ENCODE measurements at regions of chr5 and their contacts with region 1.

Region 1: GRCh38 chr5:87780831-87781760 is 368.4 kb upstream of the CCNH start:
- DNase-seq: peak; percentile 76 to 98 (median 90)

Region 2: GRCh38 chr5:87627363-87627762 is 153.7 kb before region 1 on chr5:
- intact Hi-C with region 1: no loop called
- DNase-seq: no peak

Region 3: GRCh38 chr5:87850503-87851271 is 69.6 kb after region 1 on chr5:
- intact Hi-C with region 1: no loop called
- DNase-seq: no peak

Region 4: GRCh38 chr5:87899721-87900131 is 118.6 kb after region 1 on chr5:
- intact Hi-C with region 1: loop called (anchors 5 kb)
- DNase-seq: peak in 8 of 10 donors; percentile 23 to 91 (median 58)

Region 5: GRCh38 chr5:88021141-88021540 is 240.0 kb after region 1 on chr5:
- intact Hi-C with region 1: no loop called
- DNase-seq: no peak

Region 6: DNA sequence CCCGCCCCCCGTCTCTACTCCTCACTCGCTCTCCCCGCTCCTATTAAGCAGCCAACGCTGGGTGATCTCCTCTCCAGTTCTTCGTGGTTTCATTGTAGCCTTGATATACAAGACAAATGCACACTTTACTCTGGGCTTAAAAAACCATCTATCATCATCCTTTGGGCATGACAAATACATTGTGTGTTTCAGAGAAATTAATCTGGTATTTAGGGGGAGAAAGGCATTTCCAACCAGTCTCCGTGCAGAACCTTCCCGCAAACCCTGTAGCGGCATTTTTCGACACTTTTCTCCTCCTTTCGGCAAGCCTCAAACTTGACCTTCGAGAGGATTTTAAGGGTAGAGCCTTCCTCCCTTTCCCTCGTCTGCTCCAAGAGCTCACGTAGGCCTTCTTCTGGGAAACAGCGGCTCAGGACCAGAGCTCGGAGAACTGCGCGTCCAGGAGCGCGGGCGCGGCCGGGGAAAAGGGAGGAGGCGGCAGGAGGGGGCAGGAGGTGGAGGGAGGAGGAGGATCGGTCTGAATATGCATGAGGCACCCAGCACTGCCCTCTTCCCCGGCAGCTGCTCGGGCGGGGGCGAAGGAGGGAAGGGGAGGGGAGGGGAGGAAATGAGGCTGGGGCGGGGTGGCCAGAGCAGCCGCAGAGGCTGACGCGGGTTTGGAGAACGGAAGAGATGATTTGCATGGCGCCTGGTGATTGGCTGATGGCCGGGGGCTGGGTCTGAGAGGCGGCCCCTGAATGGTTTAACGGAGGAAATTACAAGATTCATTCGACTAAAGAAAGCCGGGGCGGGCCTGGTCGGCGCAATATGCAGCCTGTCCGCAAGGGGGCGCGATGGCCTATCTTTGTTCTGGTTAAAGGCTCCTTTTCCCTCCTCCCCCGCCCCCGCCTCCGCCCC is 360.0 kb after region 1 on chr5:
- intact Hi-C with region 1: loop called (anchors 2 kb)
- DNase-seq: peak; percentile 99 to 100 (median 99)

Region 7: DNA sequence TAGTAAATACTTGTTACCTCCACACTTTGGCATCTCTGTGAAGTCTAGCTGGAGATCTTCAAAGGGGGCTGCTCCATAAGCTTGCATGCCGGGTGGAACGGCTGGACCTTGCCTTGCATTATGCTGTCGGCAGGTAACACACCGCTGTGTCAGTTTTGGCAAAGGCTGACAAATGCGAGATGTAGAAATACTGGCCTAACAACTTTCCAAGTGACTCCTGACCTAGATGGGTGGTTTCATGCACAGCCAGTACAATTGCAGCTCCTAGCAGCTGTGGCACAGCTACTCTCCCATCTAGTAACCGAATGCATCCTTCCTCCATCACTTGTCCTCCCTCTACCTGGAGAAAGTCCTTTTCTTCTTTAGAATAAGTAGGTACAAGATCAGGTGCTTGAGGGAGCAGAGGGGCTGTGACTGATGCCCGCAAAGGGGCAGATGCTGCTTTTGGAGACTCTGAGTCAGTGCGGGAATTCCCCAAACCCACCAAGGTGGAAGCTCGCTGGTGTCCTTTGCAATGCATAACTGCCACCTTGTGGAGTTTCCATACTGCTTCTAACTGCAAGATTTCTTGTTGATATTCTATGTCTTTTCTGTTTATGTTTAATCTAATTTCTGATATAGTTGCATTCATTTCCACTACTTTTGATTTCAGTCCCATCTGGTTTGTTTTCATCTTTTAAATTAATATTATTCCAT is 409.2 kb after region 1 on chr5:
- intact Hi-C with region 1: loop called (anchors 5 kb)
- DNase-seq: peak in 6 of 10 donors; percentile 21 to 86 (median 40)

Region 8: DNA sequence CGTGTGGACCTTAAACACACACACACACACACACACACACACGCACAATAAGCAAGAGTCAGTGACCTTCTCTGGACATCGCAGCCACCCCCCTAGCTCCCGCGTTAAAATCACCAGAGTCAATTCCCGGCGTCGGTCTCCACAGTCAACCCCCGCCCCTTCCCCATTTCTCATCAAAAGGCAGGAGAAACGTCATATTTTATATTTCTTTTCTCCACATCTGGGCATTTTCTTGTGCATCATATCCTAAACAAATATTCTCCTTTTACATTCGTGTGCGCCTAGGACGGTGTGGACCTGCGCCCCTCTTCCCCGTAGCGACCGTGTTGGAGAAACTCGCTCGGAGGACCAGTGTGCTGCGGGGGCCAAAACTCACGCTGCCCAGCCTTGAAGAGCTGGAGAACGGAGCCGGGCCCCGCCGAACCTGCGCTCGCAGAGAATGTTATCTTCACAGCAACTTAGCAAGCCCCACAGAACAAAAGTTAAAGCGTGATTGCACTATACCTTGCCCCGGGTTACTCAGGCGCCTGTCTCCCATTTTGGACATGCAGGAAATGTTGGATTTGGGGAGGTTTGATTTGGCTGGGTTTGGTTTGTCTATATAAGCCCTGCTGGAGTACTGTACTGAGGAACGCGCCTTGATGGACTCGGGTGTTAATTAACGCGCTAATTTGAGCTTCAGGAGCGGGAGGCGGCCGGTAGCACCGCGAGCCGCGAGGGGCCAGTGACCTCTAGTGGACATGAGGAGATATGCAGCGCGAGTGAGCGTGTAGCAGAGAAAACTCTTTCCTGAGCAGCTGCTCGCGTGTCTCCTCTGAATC is 909.5 kb after region 1 on chr5:
- intact Hi-C with region 1: loop called (anchors 5 kb)
- DNase-seq: peak; percentile 85 to 98 (median 89)

Region 9: DNA sequence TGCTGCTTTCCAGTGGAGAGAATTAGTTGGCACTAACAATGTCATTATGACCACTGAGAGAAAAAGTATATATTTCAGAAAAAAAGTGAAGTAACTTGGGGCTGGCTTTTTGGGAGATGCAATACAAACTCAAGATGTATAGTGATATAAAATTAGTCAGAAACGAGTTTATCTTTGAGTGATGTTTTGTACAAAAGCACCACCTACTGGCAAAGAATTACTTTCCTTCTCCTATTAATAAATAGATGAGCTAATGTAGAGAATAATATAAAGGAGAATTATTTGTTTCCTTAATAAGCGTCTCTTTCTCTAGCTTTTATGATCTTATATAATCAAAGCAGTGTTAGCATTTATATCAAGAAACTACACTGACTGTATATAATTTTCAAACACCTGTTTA is 943.1 kb after region 1 on chr5:
- intact Hi-C with region 1: loop called (anchors 5 kb)
- DNase-seq: no peak

Region 10: DNA sequence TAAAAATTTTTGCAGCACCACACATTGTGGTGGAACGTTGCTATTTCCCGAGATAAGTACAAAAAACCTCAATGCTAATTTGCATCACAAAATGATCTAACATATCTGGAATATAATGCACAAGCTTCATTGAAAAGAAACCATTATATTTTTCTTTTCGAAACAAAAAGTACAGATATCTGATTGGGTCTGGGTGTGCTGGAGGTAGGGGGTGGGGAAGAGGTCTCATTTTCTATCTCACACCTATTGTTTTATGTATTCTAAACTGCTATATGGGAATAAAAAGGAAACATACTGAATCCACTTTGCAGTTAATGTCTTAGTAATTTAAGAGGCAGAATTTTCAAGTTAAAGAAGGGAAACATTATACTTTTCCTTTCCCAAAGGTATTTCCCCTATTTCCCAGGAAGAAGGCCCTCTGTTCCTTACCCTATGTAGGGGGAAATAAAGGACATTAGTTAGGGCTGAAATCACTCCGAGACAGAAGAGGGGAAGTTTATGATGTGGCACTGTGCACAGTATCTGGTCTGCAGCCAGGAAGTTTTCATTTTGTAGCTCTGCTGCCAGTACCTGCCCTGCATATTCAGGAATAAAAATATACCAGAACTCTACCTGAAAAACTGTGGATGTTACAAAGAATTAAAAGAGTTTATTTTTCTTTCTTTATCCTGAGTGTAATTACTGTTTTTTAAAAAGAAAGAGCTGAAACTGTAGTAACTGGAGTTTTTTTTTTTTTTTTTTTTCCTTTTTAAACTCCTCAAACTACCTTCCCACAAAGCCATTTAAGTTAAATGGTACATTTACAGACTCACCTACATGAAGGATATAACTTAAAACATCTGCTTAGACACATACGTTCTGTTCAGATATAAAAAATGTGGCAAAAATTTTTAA is 1094.5 kb after region 1 on chr5:
- intact Hi-C with region 1: loop called (anchors 10 kb)
- DNase-seq: no peak